OCI-LY7 (cell line): ENCODE measurements at regions of chr2 and their contacts with region 1.

Region 1: DNA sequence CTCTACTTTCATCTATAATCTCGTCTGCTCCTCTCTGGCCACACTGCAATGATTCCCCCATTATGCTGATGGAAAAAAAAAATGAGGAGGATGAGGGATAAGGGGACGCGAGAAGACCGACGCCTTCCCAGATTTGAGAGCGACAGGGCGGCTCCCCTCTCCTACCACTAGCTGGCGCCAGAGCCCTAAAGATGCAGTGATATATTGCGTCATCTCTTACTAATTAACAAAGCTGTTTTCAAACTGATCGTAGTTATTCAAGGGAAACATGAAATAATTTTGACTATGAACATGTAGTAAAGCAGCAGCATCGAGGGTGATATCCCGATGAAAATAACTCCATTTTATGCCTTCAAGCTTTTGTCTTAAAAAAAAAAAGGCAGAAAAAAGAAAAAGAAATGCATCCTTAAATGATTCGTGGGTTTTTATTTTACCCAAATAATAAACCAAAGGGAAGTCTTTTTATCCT is 48.0 kb upstream of the HNRNPA3 start:
- DNase-seq: peak; percentile 85
- H3K4me3 ChIP-seq: peak overlapping the region; percentile 64
- H3K27ac ChIP-seq: peak overlapping the region; percentile 71
- H3K4me1 ChIP-seq: peaks cover 24% of the 10 kb centered on the region
- CTCF ChIP-seq: peak; percentile 100

Region 2: GRCh38 chr2:177195194-177195593 is 30.6 kb after region 1 on chr2:
- CTCF ChIA-PET with region 1: interaction called, 3 read pairs
- POLR2A ChIA-PET with region 1: interaction called, 16 read pairs
- intact Hi-C with region 1: no loop called
- DNase-seq: no peak
- H3K4me3 ChIP-seq: no peak overlapping the region
- H3K27ac ChIP-seq: no peak overlapping the region
- H3K4me1 ChIP-seq: no peaks in the 10 kb centered on the region
- CTCF ChIP-seq: peak; percentile 38; the same call in 1 of the 2 replicates

Region 3: DNA sequence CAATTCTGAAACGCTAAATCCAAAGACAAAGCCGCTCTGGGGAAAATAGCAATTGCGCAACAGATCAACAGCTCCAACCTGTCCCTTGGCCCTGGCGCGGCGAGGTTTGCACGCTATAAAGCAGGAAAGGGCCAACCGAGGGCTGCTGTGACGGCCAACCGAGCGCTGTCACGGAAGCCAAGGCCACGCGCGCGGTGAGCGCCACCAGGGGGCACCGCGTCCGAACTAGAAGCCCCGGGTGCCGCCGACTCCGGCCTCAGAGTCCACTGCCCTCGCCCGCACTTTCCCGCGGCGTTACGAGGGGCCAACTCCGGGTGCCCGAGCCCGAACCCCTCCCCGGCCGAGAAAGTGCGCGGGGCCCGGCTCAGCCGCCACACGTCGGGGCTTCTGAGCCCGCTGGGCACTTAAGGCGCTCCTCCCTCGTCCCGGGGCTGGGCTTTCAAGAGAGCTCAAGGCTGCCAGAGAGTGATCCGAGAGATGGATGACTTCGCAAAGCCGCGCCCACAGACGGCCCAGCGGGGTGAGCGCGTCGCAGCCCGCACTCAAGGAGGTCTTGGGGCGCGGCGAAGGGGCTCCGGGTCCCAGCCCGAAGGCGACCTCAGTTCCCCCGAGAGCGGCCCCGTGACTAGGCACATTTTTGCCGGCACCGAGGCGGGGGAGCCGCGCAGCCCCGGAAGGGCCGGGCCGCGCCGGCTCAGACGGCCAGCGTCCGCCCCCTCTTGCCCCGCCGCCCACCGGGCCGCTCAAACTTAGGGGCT is 99.0 kb after region 1 on chr2:
- CTCF ChIA-PET with region 1: interaction called, 4 read pairs
- POLR2A ChIA-PET with region 1: interaction called, 52 read pairs
- intact Hi-C with region 1: loop called (anchors 1 kb)
- DNase-seq: peak; percentile 97
- H3K4me3 ChIP-seq: peak overlapping the region; percentile 78
- H3K27ac ChIP-seq: peak overlapping the region; percentile 94
- H3K4me1 ChIP-seq: peaks cover 38% of the 10 kb centered on the region
- CTCF ChIP-seq: peak; percentile 82

Region 4: GRCh38 chr2:177332041-177332991 is 167.7 kb after region 1 on chr2:
- CTCF ChIA-PET with region 1: interaction called, 13 read pairs
- POLR2A ChIA-PET with region 1: interaction called, 10 read pairs
- intact Hi-C with region 1: loop called (anchors 1 kb)
- DNase-seq: peak; percentile 74
- H3K4me3 ChIP-seq: no peak overlapping the region
- H3K27ac ChIP-seq: no peak overlapping the region
- H3K4me1 ChIP-seq: peaks cover 8% of the 10 kb centered on the region
- CTCF ChIP-seq: peak; percentile 86

Region 5: DNA sequence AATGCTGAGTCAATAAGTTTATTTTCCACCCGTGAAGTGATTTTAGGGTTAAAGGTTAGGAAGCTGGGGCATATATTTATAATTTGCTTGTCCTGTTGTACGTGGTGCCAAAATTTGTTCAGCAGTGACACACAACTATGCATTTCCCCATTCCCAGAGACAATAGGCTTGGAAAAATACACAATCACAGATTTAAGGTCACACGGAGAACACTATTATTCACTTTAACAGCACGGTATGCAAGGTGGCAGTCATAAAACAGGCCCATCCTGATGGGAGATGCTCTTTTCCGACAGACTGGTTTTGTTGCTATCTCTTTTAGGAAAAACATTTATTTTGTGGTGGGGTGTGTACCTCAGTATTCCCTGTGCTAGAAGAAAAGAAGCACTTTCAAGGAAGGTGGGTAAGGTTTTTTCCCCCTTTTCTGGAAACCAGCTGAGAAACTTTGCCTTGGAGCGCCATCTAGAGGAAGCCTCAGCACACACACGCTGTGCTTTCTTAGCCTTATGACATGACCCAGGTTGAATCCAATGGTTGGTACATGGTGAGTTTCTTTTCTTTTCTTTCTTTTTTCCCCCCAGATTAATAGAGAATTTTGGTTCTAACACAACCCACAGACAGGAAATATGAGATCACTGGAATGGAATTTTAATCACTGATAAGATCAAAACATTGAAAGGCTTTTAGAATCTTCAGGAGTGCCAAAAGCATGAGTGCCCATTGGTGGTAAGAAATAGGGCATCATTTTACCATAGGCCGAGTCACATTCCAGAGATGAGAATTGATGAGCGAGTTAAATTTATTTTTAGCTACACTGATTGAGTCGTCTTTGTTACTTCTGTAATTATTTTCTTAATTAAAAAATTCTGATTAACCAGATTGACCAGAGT is 560.0 kb after region 1 on chr2:
- CTCF ChIA-PET with region 1: no interaction called
- POLR2A ChIA-PET with region 1: no interaction called
- intact Hi-C with region 1: loop called (anchors 1 kb)
- DNase-seq: peak; percentile 58
- H3K4me3 ChIP-seq: no peak overlapping the region
- H3K27ac ChIP-seq: no peak overlapping the region
- H3K4me1 ChIP-seq: no peaks in the 10 kb centered on the region
- CTCF ChIP-seq: peak; percentile 97